OCI-LY7 (cell line): ENCODE measurements at regions of chr6 and their contacts with region 1.

Region 1: GRCh38 chr6:13614926-13615798 is at the start of gene NOL7:
- DNase-seq: peak; percentile 99
- H3K4me3 ChIP-seq: peak within 1 kb of the TSS; percentile 98
- H3K27ac ChIP-seq: peak within 1 kb of the TSS; percentile 73
- H3K4me1 ChIP-seq: peaks cover 54% of the 10 kb centered on the region
- CTCF ChIP-seq: peak; percentile 81
- total RNA-seq, gene NOL7: 67.5 and 92.4 TPM in 2 replicates

Region 2: GRCh38 chr6:13194852-13195251 is 420.3 kb before region 1 on chr6:
- CTCF ChIA-PET with region 1: no interaction called
- POLR2A ChIA-PET with region 1: no interaction called
- intact Hi-C with region 1: loop called (anchors 10 kb)
- DNase-seq: peak; percentile 79
- H3K4me3 ChIP-seq: no peak overlapping the region
- H3K27ac ChIP-seq: no peak overlapping the region
- H3K4me1 ChIP-seq: no peaks in the 10 kb centered on the region
- CTCF ChIP-seq: peak; percentile 88

Region 3: GRCh38 chr6:13355043-13355951 is 259.9 kb before region 1 on chr6:
- CTCF ChIA-PET with region 1: no interaction called
- POLR2A ChIA-PET with region 1: no interaction called
- intact Hi-C with region 1: loop called (anchors 5 kb)
- DNase-seq: peak; percentile 45
- H3K4me3 ChIP-seq: peak overlapping the region; percentile 54
- H3K27ac ChIP-seq: peak overlapping the region; percentile 89
- H3K4me1 ChIP-seq: peaks cover 58% of the 10 kb centered on the region
- CTCF ChIP-seq: no peak

Region 4: DNA sequence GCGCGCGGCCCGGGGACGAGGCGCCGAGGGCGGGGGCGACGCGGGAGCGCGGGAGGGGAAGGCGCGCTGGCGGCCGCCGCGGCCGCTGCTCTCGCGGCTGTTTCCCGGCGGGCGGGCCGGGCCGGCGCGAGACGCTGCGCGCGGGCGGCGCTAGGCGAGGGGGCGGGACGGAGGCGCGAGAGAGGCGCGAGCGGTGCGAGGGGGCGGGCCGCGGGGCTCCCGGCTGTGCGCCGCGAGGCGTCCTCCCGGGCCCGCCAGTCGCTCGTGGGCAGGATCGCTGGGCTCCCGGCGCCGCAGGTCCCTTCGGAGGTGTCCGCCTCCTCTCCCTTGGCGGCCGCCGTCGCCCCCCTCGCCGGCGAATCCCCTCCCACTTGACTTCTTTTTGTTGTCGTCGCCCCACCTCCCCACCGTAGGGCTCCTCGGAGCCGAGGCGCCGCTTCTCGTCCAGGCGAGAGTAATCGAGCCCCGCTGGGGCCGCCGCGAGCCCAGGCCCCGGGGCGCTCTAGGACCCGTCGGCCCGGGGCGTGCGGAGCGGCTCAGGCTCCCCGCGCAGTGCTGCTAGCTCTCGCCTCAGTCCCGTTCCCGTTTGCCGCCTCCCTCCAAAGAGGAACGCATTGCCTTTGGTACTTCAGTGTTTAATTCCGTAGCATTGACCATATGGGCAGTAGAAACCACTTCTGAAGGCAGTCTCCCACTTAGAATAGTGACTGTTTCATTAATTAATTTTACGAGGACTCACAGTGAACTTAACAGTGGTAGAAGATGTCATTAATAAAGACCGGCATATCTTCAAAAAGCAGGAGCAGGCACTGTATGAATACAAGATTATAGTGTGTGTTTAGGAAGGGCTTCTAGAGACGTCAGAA is 96.8 kb after region 1 on chr6 and contains the start of gene RANBP9:
- CTCF ChIA-PET with region 1: no interaction called
- POLR2A ChIA-PET with region 1: interaction called, 10 read pairs
- intact Hi-C with region 1: loop called (anchors 1 kb)
- DNase-seq: peak; percentile 95
- H3K4me3 ChIP-seq: peak within 1 kb of the TSS; percentile 74
- H3K27ac ChIP-seq: peak within 1 kb of the TSS; percentile 78
- H3K4me1 ChIP-seq: peaks cover 20% of the 10 kb centered on the region
- CTCF ChIP-seq: no peak
- total RNA-seq, gene RANBP9: 20.5 and 22.2 TPM in 2 replicates

Region 5: GRCh38 chr6:13814176-13814937 is 199.2 kb after region 1 on chr6 and contains the start of gene MCUR1:
- CTCF ChIA-PET with region 1: interaction called, 3 read pairs
- POLR2A ChIA-PET with region 1: no interaction called
- intact Hi-C with region 1: loop called (anchors 2 kb)
- DNase-seq: peak; percentile 94
- H3K4me3 ChIP-seq: peak within 1 kb of the TSS; percentile 86
- H3K27ac ChIP-seq: peak within 1 kb of the TSS; percentile 87
- H3K4me1 ChIP-seq: peaks cover 30% of the 10 kb centered on the region
- CTCF ChIP-seq: peak; percentile 38; the same call in 1 of the 2 replicates
- total RNA-seq, gene MCUR1: 11.9 and 17.3 TPM in 2 replicates

Region 6: DNA sequence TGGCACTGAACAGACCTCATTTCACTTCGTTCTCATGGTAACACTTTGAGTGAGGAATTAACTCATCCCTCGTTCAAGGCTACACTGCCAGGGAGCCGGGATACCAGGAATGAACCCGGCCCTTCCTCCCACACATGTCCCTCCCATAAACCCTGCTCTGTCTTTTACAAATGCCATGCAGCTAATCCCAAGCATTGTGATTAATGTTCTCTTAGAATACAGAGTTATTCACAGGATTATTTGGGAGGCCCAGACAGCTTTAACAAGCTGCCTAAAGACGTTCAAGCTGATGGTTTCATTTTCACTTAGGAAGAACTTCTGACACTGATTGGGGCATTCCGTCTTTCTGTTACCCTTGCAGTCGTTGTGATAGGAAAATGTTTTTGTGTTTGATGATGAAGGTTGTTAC is 459.9 kb after region 1 on chr6:
- CTCF ChIA-PET with region 1: no interaction called
- POLR2A ChIA-PET with region 1: no interaction called
- intact Hi-C with region 1: loop called (anchors 10 kb)
- DNase-seq: peak; percentile 64
- H3K4me3 ChIP-seq: peak overlapping the region; percentile 62
- H3K27ac ChIP-seq: no peak overlapping the region
- H3K4me1 ChIP-seq: peaks cover 16% of the 10 kb centered on the region
- CTCF ChIP-seq: no peak